WTC11 (cell line): ENCODE measurements at regions of chr1 and their contacts with region 1.

Region 1: DNA sequence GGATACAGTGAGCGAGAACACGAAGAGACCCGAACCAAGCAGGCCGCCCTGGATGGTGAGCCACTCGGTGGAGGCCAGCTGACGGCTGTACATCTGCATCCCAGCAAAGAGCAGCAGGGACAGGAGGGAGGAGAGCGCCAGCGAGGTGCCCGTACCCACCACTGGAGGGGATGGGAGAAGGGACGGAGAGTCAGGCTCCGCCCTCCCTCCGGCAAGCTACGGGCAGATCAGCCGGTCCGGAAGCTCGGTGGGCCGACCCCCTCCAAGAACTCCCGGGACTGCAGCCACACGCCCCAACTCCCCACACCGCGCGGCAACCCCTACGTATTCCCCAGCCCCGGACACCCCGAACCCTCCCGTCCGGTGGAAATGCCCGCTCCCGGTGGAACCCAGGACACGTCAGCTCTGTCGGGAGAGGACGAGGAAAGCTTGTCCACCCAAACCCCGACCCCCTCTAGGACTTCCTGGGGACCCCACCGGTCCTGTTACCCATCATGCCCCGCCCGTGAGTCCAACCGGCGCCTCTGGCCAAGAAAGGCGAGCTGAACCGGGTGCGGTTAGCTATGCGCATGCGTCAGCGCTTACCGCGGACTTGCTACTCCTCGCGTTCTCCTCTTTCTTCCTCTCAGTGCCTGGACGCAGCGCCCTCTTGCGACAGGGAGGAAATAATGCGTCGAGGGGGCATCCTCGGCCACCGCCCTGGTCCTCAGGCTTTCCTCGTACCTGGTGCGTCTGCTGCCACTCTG is at the start of gene KRTCAP2:
- DNase-seq: peak; percentile 97
- ATAC-seq: peak; percentile 64
- H3K4me3 Mint-ChIP-seq: peak within 1 kb of the TSS; percentile 94
- H3K27ac Mint-ChIP-seq: peak within 1 kb of the TSS; percentile 95
- H3K4me1 Mint-ChIP-seq: peaks cover 29% of the 10 kb centered on the region
- H3K27me3 Mint-ChIP-seq: no peaks in the 10 kb centered on the region
- CTCF ChIP-seq: peak; percentile 88
- total RNA-seq, gene KRTCAP2: 104 to 161 TPM (median 147 TPM) in 3 replicates

Region 2: GRCh38 chr1:155017041-155017945 is 155.6 kb before region 1 on chr1:
- CTCF ChIA-PET with region 1: interaction called, 15 read pairs
- POLR2A ChIA-PET with region 1: no interaction called
- DNase-seq: peak; percentile 93
- ATAC-seq: peak; percentile 88
- H3K4me3 Mint-ChIP-seq: peak overlapping the region; percentile 62
- H3K27ac Mint-ChIP-seq: peak overlapping the region; percentile 70
- H3K4me1 Mint-ChIP-seq: peaks cover 46% of the 10 kb centered on the region
- H3K27me3 Mint-ChIP-seq: peaks cover 4% of the 10 kb centered on the region; the same call in 1 of the 2 replicates
- CTCF ChIP-seq: peak; percentile 84

Region 3: GRCh38 chr1:155070721-155071569 is 102.0 kb before region 1 on chr1:
- CTCF ChIA-PET with region 1: interaction called, 57 read pairs
- POLR2A ChIA-PET with region 1: no interaction called
- DNase-seq: peak; percentile 94
- ATAC-seq: peak; percentile 78
- H3K4me3 Mint-ChIP-seq: peak overlapping the region; percentile 75
- H3K27ac Mint-ChIP-seq: no peak overlapping the region
- H3K4me1 Mint-ChIP-seq: peaks cover 41% of the 10 kb centered on the region
- H3K27me3 Mint-ChIP-seq: peaks cover 33% of the 10 kb centered on the region
- CTCF ChIP-seq: peak; percentile 52; the same call in 1 of the 2 replicates

Region 4: DNA sequence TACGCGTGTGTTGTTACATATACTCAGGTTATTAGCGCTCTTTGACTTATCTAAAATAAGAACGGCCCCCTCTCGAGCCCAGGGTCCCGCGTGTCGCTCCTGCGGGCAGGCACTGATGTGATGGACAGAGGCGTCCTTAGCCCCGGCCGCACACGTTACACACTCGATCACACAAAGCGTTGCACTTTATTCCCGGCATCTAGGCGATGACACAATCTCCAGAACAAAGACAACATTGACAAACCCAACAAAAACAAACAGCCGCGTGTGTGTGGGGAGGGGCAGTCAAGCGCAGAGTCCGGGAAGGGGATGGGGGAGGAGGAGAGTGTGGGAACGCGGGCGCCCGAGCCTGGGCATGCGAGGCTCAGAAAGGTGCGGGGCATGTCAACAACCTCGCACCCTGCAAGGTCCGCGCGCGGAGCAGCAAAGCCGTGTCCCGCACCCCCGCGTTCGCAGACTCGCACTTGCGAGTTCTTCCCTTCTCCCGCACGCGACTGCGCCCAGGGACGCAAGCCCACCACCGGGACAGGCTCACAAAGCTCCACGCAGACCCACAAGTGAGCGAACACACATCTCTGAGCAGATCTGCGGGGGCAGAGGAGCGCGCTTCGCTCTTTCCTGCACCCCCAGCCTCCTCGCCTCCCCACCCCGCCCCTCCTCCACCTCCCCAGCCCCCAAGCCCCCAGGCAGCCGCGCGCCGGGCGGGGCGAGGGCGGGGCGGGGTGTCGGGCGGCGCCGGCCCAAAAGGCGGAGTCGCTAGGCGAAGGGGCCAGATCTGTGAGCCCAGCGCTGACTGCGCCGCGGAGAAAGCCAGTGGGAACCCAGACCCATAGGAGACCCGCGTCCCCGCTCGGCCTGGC is 45.6 kb before region 1 on chr1 and contains the start of gene EFNA1:
- CTCF ChIA-PET with region 1: interaction called, 164 read pairs
- POLR2A ChIA-PET with region 1: interaction called, 9 read pairs
- DNase-seq: peak; percentile 61
- ATAC-seq: peak; percentile 24
- H3K4me3 Mint-ChIP-seq: peak within 1 kb of the TSS; percentile 90
- H3K27ac Mint-ChIP-seq: no peak within 1 kb of the TSS; the same call in 1 of the 2 replicates
- H3K4me1 Mint-ChIP-seq: peaks cover 55% of the 10 kb centered on the region
- H3K27me3 Mint-ChIP-seq: peaks cover 55% of the 10 kb centered on the region
- CTCF ChIP-seq: no peak
- total RNA-seq, gene EFNA1: 6.0 to 7.3 TPM (median 6.5 TPM) in 3 replicates

Region 5: GRCh38 chr1:155185351-155186066 is 12.6 kb after region 1 on chr1:
- CTCF ChIA-PET with region 1: interaction called, 37 read pairs
- POLR2A ChIA-PET with region 1: no interaction called
- DNase-seq: no peak
- ATAC-seq: peak; percentile 56
- H3K4me3 Mint-ChIP-seq: no peak overlapping the region
- H3K27ac Mint-ChIP-seq: peak overlapping the region; percentile 87
- H3K4me1 Mint-ChIP-seq: peaks cover 29% of the 10 kb centered on the region
- H3K27me3 Mint-ChIP-seq: no peaks in the 10 kb centered on the region
- CTCF ChIP-seq: no peak

Region 6: DNA sequence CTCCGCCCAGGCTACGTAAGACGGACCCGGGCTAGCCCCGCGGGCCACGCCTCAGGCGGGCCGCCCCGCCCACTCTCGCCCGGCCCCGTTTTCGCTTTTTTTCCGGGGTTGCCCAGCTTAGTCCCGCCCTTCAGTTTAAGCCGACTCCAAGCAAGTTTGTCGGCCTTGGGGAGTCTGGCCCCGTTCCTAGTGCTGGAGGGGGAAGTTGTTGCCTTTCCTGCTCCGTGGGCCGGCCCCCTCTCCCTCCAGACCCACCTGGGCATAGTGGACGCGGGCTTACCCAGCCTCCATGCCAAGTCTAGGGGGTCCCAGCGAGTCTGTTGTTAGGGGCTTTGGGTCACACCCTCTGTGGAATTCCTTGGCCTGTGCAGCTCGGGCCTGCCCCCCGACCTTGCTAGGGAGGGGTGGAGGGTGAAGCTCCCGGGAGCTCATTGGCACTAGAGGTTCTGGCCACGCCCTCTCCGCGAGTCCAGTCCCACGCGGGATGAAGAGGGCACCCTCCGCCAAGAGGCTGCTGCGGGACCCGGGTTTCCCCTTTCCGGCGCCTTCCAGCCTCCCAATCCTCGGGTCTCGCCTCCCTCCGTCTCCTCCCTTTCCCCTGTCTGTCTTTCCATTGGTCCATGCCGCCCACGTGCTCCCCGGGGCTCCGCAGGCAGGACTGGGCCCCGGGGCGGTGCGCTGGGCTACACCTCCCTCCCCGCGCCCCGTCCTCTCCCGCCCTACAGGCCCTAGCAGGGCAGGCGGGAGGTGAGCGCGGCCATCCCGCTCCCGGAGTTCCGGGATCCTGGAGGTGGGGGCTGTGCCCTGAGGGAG is 151.1 kb after region 1 on chr1:
- CTCF ChIA-PET with region 1: interaction called, 17 read pairs
- POLR2A ChIA-PET with region 1: no interaction called
- DNase-seq: peak; percentile 92
- ATAC-seq: peak; percentile 63
- H3K4me3 Mint-ChIP-seq: peak overlapping the region; percentile 91
- H3K27ac Mint-ChIP-seq: peak overlapping the region; percentile 65; the same call in 1 of the 2 replicates
- H3K4me1 Mint-ChIP-seq: peaks cover 38% of the 10 kb centered on the region
- H3K27me3 Mint-ChIP-seq: peaks cover 6% of the 10 kb centered on the region
- CTCF ChIP-seq: no peak